ENCODE measurements at regions of chr7 and their contacts with region 1.

Region 1: GRCh38 chr7:38107486-38107893 is 70.6 kb upstream of the STARD3NL start:
- DNase-seq: peak; percentile 59
- H3K4me3 ChIP-seq: no peak overlapping the region
- H3K27ac ChIP-seq: no peak overlapping the region
- H3K4me1 ChIP-seq: no peaks in the 10 kb centered on the region
- H3K27me3 ChIP-seq: peaks cover 7 to 31% of the 10 kb centered on the region in 2 experiments
- CTCF ChIP-seq: peak; percentile 59 to 73
- POLR2A ChIP-seq: no peak

Region 2: DNA sequence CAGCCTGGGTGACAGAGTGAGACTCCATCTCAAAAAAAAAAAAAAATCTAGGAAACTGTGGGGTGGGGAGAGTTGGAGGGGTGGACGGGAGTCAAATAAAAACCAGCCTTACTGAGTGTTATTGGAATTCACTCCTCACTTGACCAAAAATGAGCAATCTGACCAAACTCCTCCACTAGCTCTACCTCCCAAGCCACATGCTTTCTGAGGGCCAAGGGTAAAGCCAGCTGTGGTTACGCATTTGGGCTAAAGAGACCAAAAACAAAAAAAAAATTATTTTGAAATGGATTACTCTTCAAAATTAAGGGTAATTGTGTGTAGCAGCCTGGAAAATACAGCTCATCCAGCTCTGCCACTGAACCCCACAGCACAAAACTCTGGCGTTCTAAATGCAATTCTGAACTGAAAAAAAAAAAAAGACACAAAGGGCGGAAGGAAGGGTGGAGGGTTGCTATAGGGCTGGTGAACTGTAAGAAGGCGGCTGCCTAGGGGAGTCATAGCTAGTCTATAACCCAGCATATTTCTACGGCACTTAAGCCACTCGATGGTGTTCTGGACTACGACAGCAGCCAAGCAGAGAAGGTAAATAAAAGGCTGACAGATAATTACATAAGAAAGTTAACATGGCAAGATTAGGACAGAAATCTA is 666.6 kb before region 1 on chr7:
- CTCF ChIA-PET with region 1: no interaction called
- POLR2A ChIA-PET with region 1: no interaction called
- dilution Hi-C with region 1: no loop called
- intact Hi-C with region 1: no loop called
- DNase-seq: peak; percentile 91
- H3K4me3 ChIP-seq: peak overlapping the region in 1 of 3 experiments; percentile 45
- H3K27ac ChIP-seq: peak overlapping the region; percentile 91
- H3K4me1 ChIP-seq: peaks cover 22% of the 10 kb centered on the region
- H3K27me3 ChIP-seq: no peaks in the 10 kb centered on the region
- CTCF ChIP-seq: no peak
- POLR2A ChIP-seq: no peak

Region 3: GRCh38 chr7:37901236-37901827 is 206.2 kb before region 1 on chr7:
- CTCF ChIA-PET with region 1: no interaction called
- POLR2A ChIA-PET with region 1: no interaction called
- dilution Hi-C with region 1: no loop called
- intact Hi-C with region 1: loop called (anchors 2 kb)
- DNase-seq: peak; percentile 52
- H3K4me3 ChIP-seq: no peak overlapping the region
- H3K27ac ChIP-seq: no peak overlapping the region
- H3K4me1 ChIP-seq: no peaks in the 10 kb centered on the region
- H3K27me3 ChIP-seq: no peaks in the 10 kb centered on the region
- CTCF ChIP-seq: peak; percentile 18 to 35
- POLR2A ChIP-seq: no peak

Region 4: GRCh38 chr7:38178004-38178694 is 70.7 kb after region 1 on chr7 and contains the start of gene STARD3NL:
- CTCF ChIA-PET with region 1: no interaction called
- POLR2A ChIA-PET with region 1: no interaction called
- dilution Hi-C with region 1: no loop called
- intact Hi-C with region 1: loop called (anchors 1 kb)
- DNase-seq: peak; percentile 100
- H3K4me3 ChIP-seq: peak within 1 kb of the TSS; percentile 78 to 88 (median 85)
- H3K27ac ChIP-seq: peak within 1 kb of the TSS; percentile 88
- H3K4me1 ChIP-seq: peaks cover 34% of the 10 kb centered on the region
- H3K27me3 ChIP-seq: peaks cover 2 to 16% of the 10 kb centered on the region in 2 experiments
- CTCF ChIP-seq: no peak
- POLR2A ChIP-seq: peak; percentile 71
- total RNA-seq, gene STARD3NL: 68.9 and 73.6 TPM in 2 replicates

Region 5: DNA sequence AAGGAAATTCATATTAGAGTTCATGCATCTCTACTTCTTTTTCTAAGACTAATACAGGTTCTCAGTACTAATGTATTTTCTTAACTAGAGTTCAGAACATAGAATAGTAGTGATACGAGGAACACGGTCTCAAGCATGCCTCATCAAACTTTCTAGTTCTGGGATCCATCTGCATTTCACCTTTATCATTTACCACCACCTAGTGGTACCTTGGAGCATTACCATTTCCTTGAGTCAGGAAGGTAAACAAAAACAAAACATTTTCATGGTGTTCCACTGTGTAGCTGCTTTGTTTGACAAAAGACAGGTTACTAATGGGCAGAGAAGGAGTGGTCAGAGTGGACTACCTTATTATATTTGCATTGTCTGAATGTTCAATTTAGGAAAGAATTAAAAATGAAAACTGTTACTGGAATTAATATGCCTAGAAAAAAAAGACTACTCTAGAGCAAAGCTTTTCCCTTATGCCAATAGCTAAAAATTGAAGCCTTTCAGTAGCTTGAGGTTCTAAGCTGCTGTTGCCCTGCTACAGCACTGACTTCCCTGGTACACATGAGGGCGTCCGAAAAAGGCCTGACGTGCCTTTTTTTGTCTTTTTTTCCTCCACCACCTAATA is 115.1 kb after region 1 on chr7:
- CTCF ChIA-PET with region 1: interaction called, 60 read pairs
- POLR2A ChIA-PET with region 1: no interaction called
- dilution Hi-C with region 1: no loop called
- intact Hi-C with region 1: loop called (anchors 1 kb)
- DNase-seq: peak; percentile 75
- H3K4me3 ChIP-seq: no peak overlapping the region
- H3K27ac ChIP-seq: no peak overlapping the region
- H3K4me1 ChIP-seq: no peaks in the 10 kb centered on the region
- H3K27me3 ChIP-seq: no peaks in the 10 kb centered on the region
- CTCF ChIP-seq: peak; percentile 47 to 63
- POLR2A ChIP-seq: no peak

Region 6: DNA sequence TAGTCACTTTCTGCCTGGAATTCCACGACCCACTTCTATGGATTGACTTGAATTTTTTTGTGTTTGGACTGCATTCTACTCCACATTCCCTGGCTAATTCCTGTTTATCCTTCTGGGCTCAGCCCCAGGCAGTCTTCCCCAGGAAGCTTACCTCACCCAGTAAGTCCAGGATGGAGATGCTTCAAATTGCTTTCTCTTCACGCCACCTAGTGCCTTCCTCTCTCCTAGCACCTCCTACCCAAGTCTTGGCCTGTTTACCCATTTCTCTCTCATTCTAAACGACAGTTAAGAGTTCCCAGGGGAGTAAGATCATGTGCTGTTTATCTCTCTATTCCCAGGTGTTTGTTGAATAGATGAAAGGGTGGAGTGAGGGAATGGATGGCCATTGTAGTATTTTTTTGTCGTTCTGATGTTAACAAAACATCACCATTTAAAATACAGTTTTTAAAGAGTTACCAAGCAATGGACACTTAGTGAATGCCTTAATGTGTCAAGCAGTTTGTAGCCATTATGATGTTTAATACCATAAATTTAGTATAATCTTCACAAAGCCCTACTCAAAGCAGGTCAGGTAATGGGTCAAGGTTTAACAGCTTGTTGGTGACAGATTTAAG is 211.4 kb after region 1 on chr7:
- CTCF ChIA-PET with region 1: interaction called, 47 read pairs
- POLR2A ChIA-PET with region 1: no interaction called
- dilution Hi-C with region 1: no loop called
- intact Hi-C with region 1: loop called (anchors 1 kb)
- DNase-seq: peak; percentile 74
- H3K4me3 ChIP-seq: no peak overlapping the region
- H3K27ac ChIP-seq: no peak overlapping the region
- H3K4me1 ChIP-seq: no peaks in the 10 kb centered on the region
- H3K27me3 ChIP-seq: peaks cover 0 to 1% of the 10 kb centered on the region in 2 experiments
- CTCF ChIP-seq: peak; percentile 64 to 67
- POLR2A ChIP-seq: no peak

Region 7: DNA sequence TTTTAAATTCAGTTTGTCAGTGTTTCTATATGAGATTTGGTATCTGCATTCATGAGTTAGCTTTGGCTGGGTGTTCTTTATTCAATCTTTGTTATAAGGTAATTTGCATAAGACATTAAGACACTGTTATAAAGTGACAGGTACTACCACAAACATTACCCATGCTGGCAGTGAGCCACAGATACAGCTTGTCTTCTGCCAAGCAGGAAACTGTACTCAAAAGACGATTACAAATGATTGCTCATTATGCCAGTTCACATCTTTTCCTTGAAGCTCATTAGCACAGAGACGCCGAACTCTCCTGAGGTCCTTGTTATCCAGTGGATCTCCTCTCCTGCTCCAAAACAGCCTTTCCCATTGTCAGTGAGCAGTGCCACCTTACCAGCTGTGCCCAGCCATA is 493.3 kb after region 1 on chr7:
- CTCF ChIA-PET with region 1: no interaction called
- POLR2A ChIA-PET with region 1: no interaction called
- dilution Hi-C with region 1: no loop called
- intact Hi-C with region 1: no loop called
- DNase-seq: no peak
- H3K4me3 ChIP-seq: no peak overlapping the region
- H3K27ac ChIP-seq: no peak overlapping the region
- H3K4me1 ChIP-seq: no peaks in the 10 kb centered on the region
- H3K27me3 ChIP-seq: no peaks in the 10 kb centered on the region
- CTCF ChIP-seq: no peak
- POLR2A ChIP-seq: no peak